ENCODE measurements at regions of chr3 and their contacts with region 1.

Region 1: GRCh38 chr3:129490242-129491045 is 38.0 kb upstream of the RHO start:
- DNase-seq: peak; percentile 22 to 83 (median 42)
- ATAC-seq: peak; percentile 98
- H3K4me3 ChIP-seq: no peak overlapping the region
- H3K4me3 Mint-ChIP-seq: no peak overlapping the region
- H3K27ac ChIP-seq: no peak overlapping the region
- H3K27ac Mint-ChIP-seq: no peak overlapping the region
- H3K4me1 ChIP-seq: peaks cover 6% of the 10 kb centered on the region
- H3K4me1 Mint-ChIP-seq: no peaks in the 10 kb centered on the region
- H3K27me3 ChIP-seq: no peaks in the 10 kb centered on the region
- H3K27me3 Mint-ChIP-seq: no peaks in the 10 kb centered on the region
- CTCF ChIP-seq: peak; percentile 86

Region 2: GRCh38 chr3:129378949-129379348 is 111.5 kb before region 1 on chr3:
- CTCF ChIA-PET with region 1: no interaction called
- POLR2A ChIA-PET with region 1: no interaction called
- intact Hi-C with region 1: no loop called
- DNase-seq: no peak
- ATAC-seq: no peak
- H3K4me3 ChIP-seq: no peak overlapping the region
- H3K4me3 Mint-ChIP-seq: no peak overlapping the region
- H3K27ac ChIP-seq: no peak overlapping the region
- H3K27ac Mint-ChIP-seq: no peak overlapping the region
- H3K4me1 ChIP-seq: no peaks in the 10 kb centered on the region
- H3K4me1 Mint-ChIP-seq: no peaks in the 10 kb centered on the region
- H3K27me3 ChIP-seq: no peaks in the 10 kb centered on the region
- H3K27me3 Mint-ChIP-seq: no peaks in the 10 kb centered on the region
- CTCF ChIP-seq: no peak

Region 3: GRCh38 chr3:129606636-129607390 is 116.4 kb after region 1 on chr3 and contains the start of gene PLXND1:
- CTCF ChIA-PET with region 1: no interaction called
- POLR2A ChIA-PET with region 1: no interaction called
- intact Hi-C with region 1: loop called in 1 of 2 experiments (anchors 5 kb)
- DNase-seq: peak in 11 of 14 experiments; percentile 10 to 79 (median 46)
- ATAC-seq: peak; percentile 53
- H3K4me3 ChIP-seq: peak within 1 kb of the TSS; percentile 61
- H3K4me3 Mint-ChIP-seq: peak within 1 kb of the TSS; percentile 95
- H3K27ac ChIP-seq: no peak within 1 kb of the TSS
- H3K27ac Mint-ChIP-seq: peak within 1 kb of the TSS; percentile 67
- H3K4me1 ChIP-seq: peaks cover 51% of the 10 kb centered on the region
- H3K4me1 Mint-ChIP-seq: peaks cover 33% of the 10 kb centered on the region
- H3K27me3 ChIP-seq: peaks cover 0 to 5% of the 10 kb centered on the region in 2 experiments
- H3K27me3 Mint-ChIP-seq: peaks cover 20% of the 10 kb centered on the region
- CTCF ChIP-seq: no peak
- total RNA-seq, gene PLXND1: 61.7 to 62.5 TPM

Region 4: GRCh38 chr3:129627429-129628168 is 137.2 kb after region 1 on chr3:
- CTCF ChIA-PET with region 1: interaction called, 3 read pairs
- POLR2A ChIA-PET with region 1: interaction called, 5 read pairs
- intact Hi-C with region 1: loop called (anchors 1 to 5 kb)
- DNase-seq: peak; percentile 55 to 83 (median 62)
- ATAC-seq: peak; percentile 86
- H3K4me3 ChIP-seq: peak overlapping the region; percentile 66
- H3K4me3 Mint-ChIP-seq: peak overlapping the region; percentile 92
- H3K27ac ChIP-seq: peak overlapping the region in 1 of 2 donors; percentile 27
- H3K27ac Mint-ChIP-seq: peak overlapping the region; percentile 66
- H3K4me1 ChIP-seq: peaks cover 28% of the 10 kb centered on the region
- H3K4me1 Mint-ChIP-seq: peaks cover 17% of the 10 kb centered on the region
- H3K27me3 ChIP-seq: no peaks in the 10 kb centered on the region
- H3K27me3 Mint-ChIP-seq: no peaks in the 10 kb centered on the region
- CTCF ChIP-seq: peak; percentile 70

Measured in CD4-positive, alpha-beta T cell (primary cell).